Activated CD8-positive, alpha-beta T cell treated with anti-CD3 and anti-CD28 coated beads for 36 hours (primary cell): ENCODE measurements at regions of chr17 and their contacts with region 1.

Region 1: DNA sequence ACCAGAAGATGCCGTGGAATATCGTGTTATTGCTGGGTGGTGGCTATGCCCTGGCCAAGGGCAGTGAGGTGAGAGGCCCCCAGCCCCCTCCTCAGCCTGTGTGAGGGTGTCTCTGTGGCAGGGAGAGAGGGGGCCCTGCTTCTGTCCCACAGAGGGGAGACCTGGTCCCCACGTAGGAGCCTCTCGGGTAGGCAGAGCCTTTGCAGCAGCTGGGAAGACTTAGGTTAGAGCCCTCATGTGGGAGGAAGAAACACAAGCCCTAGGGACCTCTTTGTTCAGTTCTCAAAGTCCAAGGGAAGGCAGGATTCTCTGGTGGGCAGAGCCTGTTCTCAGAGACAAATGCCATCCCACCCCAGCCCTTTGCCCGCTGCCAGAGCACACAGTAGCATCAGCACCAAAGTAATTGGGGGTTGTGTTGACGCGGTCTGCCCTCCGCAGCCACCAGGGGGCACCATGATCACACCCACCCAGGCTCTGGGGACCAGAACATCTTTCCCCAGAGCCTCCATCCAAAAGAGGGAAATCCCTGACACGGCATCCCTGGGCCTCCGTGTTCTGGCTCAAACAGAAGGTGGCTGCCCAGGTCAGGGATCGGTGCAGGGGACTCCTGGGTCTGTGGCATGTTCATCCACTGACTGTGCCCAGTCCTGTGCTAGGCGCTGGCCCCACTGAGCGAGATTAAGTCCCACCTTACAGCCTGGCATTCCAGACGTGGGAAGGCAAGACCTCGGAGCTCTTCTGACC is 11.5 kb upstream of the FOXN1 start:
- DNase-seq: peak; percentile 84
- ATAC-seq: peak; percentile 96
- H3K4me3 Mint-ChIP-seq: no peak overlapping the region
- H3K27ac Mint-ChIP-seq: no peak overlapping the region
- H3K4me1 Mint-ChIP-seq: no peaks in the 10 kb centered on the region
- H3K27me3 Mint-ChIP-seq: peaks cover 2% of the 10 kb centered on the region
- CTCF ChIP-seq: peak; percentile 83

Region 2: GRCh38 chr17:28484296-28484695 is 10.3 kb before region 1 on chr17:
- CTCF ChIA-PET with region 1: interaction called, 13 read pairs
- POLR2A ChIA-PET with region 1: interaction called, 3 read pairs
- intact Hi-C with region 1: no loop called
- DNase-seq: no peak
- ATAC-seq: no peak
- H3K4me3 Mint-ChIP-seq: no peak overlapping the region
- H3K27ac Mint-ChIP-seq: no peak overlapping the region
- H3K4me1 Mint-ChIP-seq: no peaks in the 10 kb centered on the region
- H3K27me3 Mint-ChIP-seq: no peaks in the 10 kb centered on the region
- CTCF ChIP-seq: no peak

Region 3: GRCh38 chr17:28540231-28540630 is 45.6 kb after region 1 on chr17:
- CTCF ChIA-PET with region 1: interaction called, 7 read pairs
- POLR2A ChIA-PET with region 1: no interaction called
- intact Hi-C with region 1: loop called (anchors 1 kb)
- DNase-seq: no peak
- ATAC-seq: no peak
- H3K4me3 Mint-ChIP-seq: no peak overlapping the region
- H3K27ac Mint-ChIP-seq: no peak overlapping the region
- H3K4me1 Mint-ChIP-seq: no peaks in the 10 kb centered on the region
- H3K27me3 Mint-ChIP-seq: no peaks in the 10 kb centered on the region
- CTCF ChIP-seq: no peak